A673 (cell line): ENCODE measurements at regions of chr22 and their contacts with region 1.

Region 1: DNA sequence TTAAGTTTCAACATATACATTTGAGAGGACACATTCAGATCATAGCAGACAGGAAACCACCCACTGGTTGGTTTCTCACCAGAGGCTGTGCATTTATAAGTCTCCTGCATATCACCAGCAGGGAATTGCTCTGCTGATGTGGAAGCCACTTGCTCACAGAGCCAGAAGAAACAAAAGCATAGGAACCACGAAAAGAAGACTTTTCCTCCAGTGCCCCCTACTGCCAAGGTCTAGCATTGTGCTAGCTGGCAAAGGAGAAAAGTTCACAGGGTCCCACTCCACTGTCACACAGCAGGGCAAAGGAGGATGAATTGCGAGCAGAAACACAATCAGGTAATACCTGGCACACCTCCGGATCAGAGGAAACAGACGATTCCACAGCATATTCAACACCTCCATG is 28.9 kb upstream of the ISX start:
- DNase-seq: peak; percentile 28
- H3K4me3 ChIP-seq: no peak overlapping the region
- H3K27ac ChIP-seq: no peak overlapping the region
- H3K4me1 ChIP-seq: no peaks in the 10 kb centered on the region
- H3K27me3 ChIP-seq: peaks cover 22% of the 10 kb centered on the region
- CTCF ChIP-seq: peak; percentile 45

Region 2: GRCh38 chr22:35008213-35008612 is 28.9 kb before region 1 on chr22:
- CTCF ChIA-PET with region 1: interaction called, 16 read pairs
- POLR2A ChIA-PET with region 1: no interaction called
- intact Hi-C with region 1: no loop called
- DNase-seq: no peak
- H3K4me3 ChIP-seq: no peak overlapping the region
- H3K27ac ChIP-seq: no peak overlapping the region
- H3K4me1 ChIP-seq: no peaks in the 10 kb centered on the region
- H3K27me3 ChIP-seq: no peaks in the 10 kb centered on the region
- CTCF ChIP-seq: no peak

Region 3: DNA sequence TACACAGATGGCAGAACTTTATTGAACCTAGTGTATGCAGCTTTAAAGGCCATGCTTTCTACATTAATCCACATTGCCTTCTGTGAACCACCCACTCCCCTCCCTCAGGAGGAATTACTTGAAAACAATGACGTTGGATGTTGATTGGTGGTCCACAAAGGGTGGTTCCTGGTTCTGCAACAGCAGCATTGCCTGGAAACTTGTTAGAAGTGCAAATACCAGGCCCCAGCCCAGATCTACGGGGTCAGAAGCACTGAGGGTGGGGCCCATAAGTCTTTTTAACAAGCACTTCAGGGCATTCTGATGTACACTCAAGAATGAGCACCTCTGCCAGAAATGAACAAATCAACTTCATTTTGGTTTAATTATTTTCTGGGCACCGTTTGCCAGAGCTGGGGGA is 119.9 kb after region 1 on chr22:
- CTCF ChIA-PET with region 1: interaction called, 10 read pairs
- POLR2A ChIA-PET with region 1: no interaction called
- intact Hi-C with region 1: no loop called
- DNase-seq: no peak
- H3K4me3 ChIP-seq: peak overlapping the region; percentile 46
- H3K27ac ChIP-seq: peak overlapping the region; percentile 4
- H3K4me1 ChIP-seq: no peaks in the 10 kb centered on the region
- H3K27me3 ChIP-seq: no peaks in the 10 kb centered on the region
- CTCF ChIP-seq: no peak